Dorsolateral prefrontal cortex (tissue), 120 donors: ENCODE measurements at regions of chr7 and their contacts with region 1.

Region 1: DNA sequence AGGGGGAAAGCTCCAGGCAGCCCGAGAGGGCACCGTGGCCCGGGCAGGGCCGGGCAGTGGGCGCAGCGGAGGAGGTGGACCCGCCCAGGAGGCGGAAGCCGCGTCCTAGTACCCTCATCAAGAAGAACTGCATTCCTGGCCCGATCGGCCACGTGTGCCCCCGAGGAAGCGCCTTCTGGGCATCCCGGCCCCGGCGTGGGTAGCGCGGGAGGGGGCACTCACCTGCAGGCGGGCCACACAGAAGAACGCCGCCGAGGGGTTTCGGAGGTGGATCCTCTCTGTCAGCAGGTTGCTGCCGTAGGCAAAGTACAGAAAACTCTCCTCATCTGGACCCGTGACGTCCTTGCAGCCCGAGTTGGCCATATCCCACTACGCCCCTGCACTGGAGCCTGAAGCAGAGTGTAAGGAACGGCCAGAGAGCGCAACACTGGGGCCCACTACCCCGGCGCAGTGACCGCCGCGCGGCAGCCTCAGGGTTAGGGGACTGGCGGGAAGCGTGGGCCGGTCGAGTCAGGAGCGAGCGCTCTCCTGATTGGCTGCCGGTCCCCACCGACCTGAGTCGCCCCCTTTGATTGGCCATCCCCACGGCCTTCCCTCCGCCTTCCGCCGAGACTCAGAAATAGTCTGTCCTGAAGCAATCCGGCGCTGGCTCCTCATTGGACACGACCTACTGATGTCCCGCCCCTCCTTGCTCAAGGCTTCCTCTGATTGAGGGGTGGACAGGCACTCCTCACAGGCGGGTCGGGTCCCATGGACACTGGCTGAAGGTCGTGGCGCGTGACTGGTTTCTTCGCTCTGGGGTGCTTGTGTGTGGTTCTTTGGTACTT is at the start of gene GGCT:
- DNase-seq: peak; percentile 99 to 100 (median 100)
- H3K4me3 ChIP-seq: peak within 1 kb of the TSS; percentile 64 to 99 (median 91)
- H3K27ac ChIP-seq: peak within 1 kb of the TSS in 56 of 59 donors; percentile 1 to 94 (median 79)
- H3K27me3 ChIP-seq: no peaks in the 10 kb centered on the region
- CTCF ChIP-seq: peak in 23 of 56 donors; percentile 3 to 52 (median 27)
- total RNA-seq, gene GGCT: 14.1 to 56.5 (median 30.5) TPM

Region 2: DNA sequence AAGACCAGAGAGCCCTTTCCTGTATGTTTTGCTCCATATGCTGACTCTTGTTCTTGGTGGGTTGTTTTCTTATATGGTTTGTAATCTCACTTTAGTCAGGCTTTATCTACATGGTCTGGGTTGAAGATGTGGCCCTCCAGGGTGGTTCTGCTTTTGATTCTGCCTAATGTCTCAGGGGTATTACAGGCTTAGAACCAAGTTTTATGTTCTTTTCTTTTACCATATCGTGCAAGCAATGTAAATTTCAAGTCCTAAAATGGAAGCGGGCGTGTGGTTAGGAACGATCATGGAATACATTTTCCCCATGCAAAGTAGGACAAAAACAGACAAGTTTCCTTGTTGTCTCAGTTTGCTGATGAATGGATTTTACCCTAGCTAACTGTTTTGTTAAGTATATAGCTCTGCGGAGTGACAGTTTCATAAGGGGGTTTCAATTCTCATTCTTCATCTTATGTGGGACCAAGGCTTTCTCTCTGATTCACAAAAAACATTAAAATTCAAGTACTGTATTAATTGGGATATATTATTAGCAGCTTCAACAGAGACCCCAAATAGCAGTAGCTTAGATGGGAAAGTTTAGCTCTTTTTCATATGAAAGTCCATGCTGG is 311.1 kb before region 1 on chr7:
- intact Hi-C with region 1: no loop called
- DNase-seq: no peak
- H3K4me3 ChIP-seq: no peak overlapping the region
- H3K27ac ChIP-seq: no peak overlapping the region
- H3K27me3 ChIP-seq: no peaks in the 10 kb centered on the region
- CTCF ChIP-seq: no peak

Region 3: DNA sequence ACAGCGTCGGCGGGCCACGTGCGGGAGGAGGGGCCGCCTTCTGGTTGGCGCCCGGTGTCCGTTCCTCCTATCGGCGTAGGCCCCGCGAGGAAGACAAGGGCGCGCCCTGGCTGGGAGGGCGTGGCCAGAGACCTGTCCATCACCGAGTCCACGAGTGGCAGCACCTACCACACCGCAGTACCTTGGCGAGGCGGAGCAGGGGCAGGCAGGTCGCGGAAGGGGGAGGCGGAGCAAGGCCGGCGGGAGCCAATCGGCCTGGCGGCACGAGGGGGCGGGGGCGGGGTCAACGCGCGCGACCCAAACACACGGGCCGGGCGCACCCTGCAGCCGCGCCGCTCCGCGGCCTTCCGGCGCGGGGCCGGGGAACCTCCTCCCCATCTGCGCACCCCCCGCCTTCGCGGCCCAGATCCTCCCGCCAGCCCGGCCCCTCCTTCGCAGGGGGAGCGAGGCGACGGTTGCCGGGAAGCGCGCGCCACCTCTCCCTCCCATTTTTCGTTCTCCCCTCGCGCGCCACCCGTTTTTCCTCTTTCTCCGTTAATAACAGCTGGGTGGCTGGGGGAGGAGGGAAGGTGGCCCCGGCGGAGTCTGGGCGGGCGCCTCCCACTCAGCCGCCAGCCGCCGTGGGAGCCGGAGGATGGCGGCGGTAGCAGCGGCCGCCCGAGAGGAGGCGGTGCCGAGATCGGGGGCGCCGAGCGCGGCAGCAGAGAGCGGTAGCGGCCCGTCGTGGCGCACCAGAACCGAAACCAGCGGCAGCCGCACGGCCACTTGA is 220.1 kb before region 1 on chr7 and contains the start of gene ZNRF2:
- intact Hi-C with region 1: loop called (anchors 5 kb)
- DNase-seq: peak; percentile 82 to 99 (median 95)
- H3K4me3 ChIP-seq: peak within 1 kb of the TSS; percentile 36 to 92 (median 77)
- H3K27ac ChIP-seq: peak within 1 kb of the TSS; percentile 63 to 99 (median 95)
- H3K27me3 ChIP-seq: no peaks in the 10 kb centered on the region
- CTCF ChIP-seq: peak in 51 of 56 donors; percentile 13 to 65 (median 43)
- total RNA-seq, gene ZNRF2: 11.4 to 24.8 (median 16.7) TPM

Region 4: GRCh38 chr7:30478349-30479201 is 26.0 kb before region 1 on chr7 and contains the start of gene NOD1:
- intact Hi-C with region 1: loop called in 1 of 2 experiments (anchors 2 kb)
- DNase-seq: peak in 8 of 10 donors; percentile 41 to 77 (median 58)
- H3K4me3 ChIP-seq: peak within 1 kb of the TSS; percentile 53 to 98 (median 77)
- H3K27ac ChIP-seq: peak within 1 kb of the TSS in 58 of 59 donors; percentile 6 to 93 (median 76)
- H3K27me3 ChIP-seq: no peaks in the 10 kb centered on the region
- CTCF ChIP-seq: peak in 18 of 56 donors; percentile 3 to 30 (median 15)
- total RNA-seq, gene NOD1: 2.5 to 12.4 (median 5.4) TPM